Activated naive CD8-positive, alpha-beta T cell treated with anti-CD3 and anti-CD28 coated beads, Interleukin-2, amount 10 ng/mL, durations not matched to agents 7 days and 5 days (primary cell): ENCODE measurements at regions of chr15 and their contacts with region 1.

Region 1: GRCh38 chr15:92881802-92882696 is 18.1 kb upstream of the CHD2 start:
- DNase-seq: peak; percentile 97
- ATAC-seq: peak; percentile 91
- H3K4me3 Mint-ChIP-seq: peak overlapping the region; percentile 90
- H3K27ac Mint-ChIP-seq: peak overlapping the region; percentile 95
- H3K4me1 Mint-ChIP-seq: peaks cover 53% of the 10 kb centered on the region
- H3K27me3 Mint-ChIP-seq: no peaks in the 10 kb centered on the region

Region 2: GRCh38 chr15:92820236-92821021 is 61.6 kb before region 1 on chr15:
- POLR2A ChIA-PET with region 1: interaction called, 179 read pairs
- DNase-seq: peak; percentile 86
- ATAC-seq: peak; percentile 82
- H3K4me3 Mint-ChIP-seq: peak overlapping the region; percentile 87
- H3K27ac Mint-ChIP-seq: peak overlapping the region; percentile 83
- H3K4me1 Mint-ChIP-seq: peaks cover 47% of the 10 kb centered on the region
- H3K27me3 Mint-ChIP-seq: no peaks in the 10 kb centered on the region

Region 3: DNA sequence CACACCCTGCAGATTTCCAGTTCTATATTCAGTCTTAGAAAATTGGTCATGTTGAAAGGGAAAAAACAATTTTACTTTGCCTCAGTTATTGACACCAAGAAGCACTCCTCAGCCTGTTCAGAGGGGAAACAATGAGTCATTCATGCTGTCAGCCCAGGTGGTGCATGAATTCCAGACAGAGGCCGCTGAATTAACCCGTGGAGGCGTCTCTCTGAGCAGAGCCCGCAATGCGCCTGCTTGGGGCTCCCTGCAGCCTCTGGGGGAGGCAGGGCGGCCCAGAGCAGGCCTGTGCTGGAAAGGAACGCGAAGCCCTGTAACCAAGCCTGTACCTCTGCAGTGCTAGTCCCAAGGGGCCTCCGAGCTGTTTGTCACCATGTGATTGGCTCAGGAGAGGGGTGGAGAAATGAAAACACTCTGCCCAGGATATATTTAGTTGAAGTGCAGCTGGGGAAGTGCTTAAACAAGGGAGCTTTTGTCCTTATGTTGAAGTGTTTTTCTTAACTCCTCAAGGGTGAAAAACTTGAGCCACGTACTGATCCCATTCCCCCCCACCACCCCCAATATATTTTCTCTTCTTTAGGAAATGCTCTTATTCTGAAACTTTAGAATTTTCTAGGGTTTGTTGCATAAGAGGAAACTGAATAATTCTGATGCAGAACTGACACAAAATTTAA is 50.3 kb before region 1 on chr15:
- POLR2A ChIA-PET with region 1: interaction called, 266 read pairs
- DNase-seq: peak; percentile 85
- ATAC-seq: peak; percentile 99
- H3K4me3 Mint-ChIP-seq: peak overlapping the region; percentile 67
- H3K27ac Mint-ChIP-seq: peak overlapping the region; percentile 92
- H3K4me1 Mint-ChIP-seq: peaks cover 34% of the 10 kb centered on the region
- H3K27me3 Mint-ChIP-seq: no peaks in the 10 kb centered on the region

Region 4: GRCh38 chr15:92839696-92840095 is 42.4 kb before region 1 on chr15:
- POLR2A ChIA-PET with region 1: interaction called, 266 read pairs
- DNase-seq: no peak
- ATAC-seq: peak; percentile 66
- H3K4me3 Mint-ChIP-seq: peak overlapping the region; percentile 58
- H3K27ac Mint-ChIP-seq: peak overlapping the region; percentile 81
- H3K4me1 Mint-ChIP-seq: peaks cover 30% of the 10 kb centered on the region
- H3K27me3 Mint-ChIP-seq: no peaks in the 10 kb centered on the region

Region 5: DNA sequence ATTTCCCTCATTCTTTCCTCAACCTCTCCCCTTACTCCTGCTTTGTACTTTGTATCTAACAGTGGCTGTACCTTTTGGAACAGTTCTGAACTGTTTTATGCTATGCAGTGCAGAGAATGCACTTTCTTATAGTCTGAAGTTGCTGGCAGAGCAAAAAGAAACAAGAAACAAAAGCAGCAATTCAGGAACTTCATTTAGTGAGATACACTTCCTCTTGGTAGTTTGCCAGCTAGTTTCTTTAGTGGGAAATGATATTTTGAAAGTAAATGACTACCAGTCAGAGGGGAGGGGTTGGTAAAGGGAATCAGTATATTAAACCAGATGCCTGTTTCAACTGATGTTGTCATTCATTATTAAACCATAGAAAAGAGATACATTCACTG is 36.9 kb before region 1 on chr15:
- POLR2A ChIA-PET with region 1: interaction called, 121 read pairs
- DNase-seq: no peak
- ATAC-seq: peak; percentile 6
- H3K4me3 Mint-ChIP-seq: peak overlapping the region; percentile 81
- H3K27ac Mint-ChIP-seq: peak overlapping the region; percentile 95
- H3K4me1 Mint-ChIP-seq: peaks cover 50% of the 10 kb centered on the region
- H3K27me3 Mint-ChIP-seq: no peaks in the 10 kb centered on the region

Region 6: GRCh38 chr15:92903941-92904831 is 22.1 kb after region 1 on chr15:
- POLR2A ChIA-PET with region 1: interaction called, 711 read pairs
- DNase-seq: peak; percentile 100
- ATAC-seq: peak; percentile 88
- H3K4me3 Mint-ChIP-seq: peak overlapping the region; percentile 99
- H3K27ac Mint-ChIP-seq: peak overlapping the region; percentile 100
- H3K4me1 Mint-ChIP-seq: peaks cover 52% of the 10 kb centered on the region
- H3K27me3 Mint-ChIP-seq: no peaks in the 10 kb centered on the region

Region 7: DNA sequence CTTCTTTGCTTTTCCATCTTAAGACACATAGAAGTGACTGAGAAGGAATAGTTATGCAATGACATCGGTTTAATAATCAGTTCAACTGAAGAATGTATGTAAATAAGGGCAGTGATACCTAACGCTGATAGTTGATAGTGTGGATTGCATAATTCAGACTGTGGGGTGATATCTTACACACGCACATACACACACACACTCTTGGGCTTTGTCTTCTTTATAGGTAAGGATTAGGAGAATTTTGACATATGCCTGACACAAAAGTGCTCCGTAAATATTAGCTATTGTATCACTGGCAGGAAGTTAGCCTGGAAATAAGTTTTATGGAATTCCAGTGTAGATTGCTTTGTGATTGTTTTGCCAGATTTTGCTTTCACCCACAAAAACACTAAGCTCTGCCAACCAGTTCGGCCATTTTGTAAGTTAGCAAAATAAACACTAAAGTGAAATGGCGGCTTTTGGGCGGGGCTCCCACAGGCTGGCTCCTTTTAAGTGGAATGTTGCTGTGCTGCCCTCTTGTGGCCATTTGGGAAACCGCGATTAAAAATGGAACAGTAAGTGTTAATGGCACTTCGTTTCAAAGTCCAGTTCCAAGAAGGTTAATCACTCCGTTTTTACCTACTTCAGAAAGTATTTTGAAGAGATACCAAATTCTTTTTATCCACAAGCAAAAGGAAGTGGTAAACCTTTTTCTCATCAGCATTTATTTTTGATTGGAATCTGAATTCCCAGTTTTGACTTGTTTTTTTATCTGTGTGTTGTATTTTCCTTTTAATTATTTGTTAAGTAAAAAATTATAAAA is 35.8 kb after region 1 on chr15:
- POLR2A ChIA-PET with region 1: interaction called, 73 read pairs
- DNase-seq: peak; percentile 86
- ATAC-seq: peak; percentile 28
- H3K4me3 Mint-ChIP-seq: peak overlapping the region; percentile 62
- H3K27ac Mint-ChIP-seq: peak overlapping the region; percentile 78
- H3K4me1 Mint-ChIP-seq: peaks cover 73% of the 10 kb centered on the region
- H3K27me3 Mint-ChIP-seq: no peaks in the 10 kb centered on the region